ENCODE measurements at regions of chr4 and their contacts with region 1.

Region 1: GRCh38 chr4:38804654-38805295 is at the start of gene TLR1:
- DNase-seq: peak; percentile 30
- H3K4me3 Mint-ChIP-seq: peak within 1 kb of the TSS; percentile 69
- H3K27ac Mint-ChIP-seq: peak within 1 kb of the TSS; percentile 90
- H3K4me1 Mint-ChIP-seq: peaks cover 30% of the 10 kb centered on the region
- H3K27me3 Mint-ChIP-seq: no peaks in the 10 kb centered on the region
- total RNA-seq, gene TLR1: 4.0 to 4.2 TPM

Region 2: DNA sequence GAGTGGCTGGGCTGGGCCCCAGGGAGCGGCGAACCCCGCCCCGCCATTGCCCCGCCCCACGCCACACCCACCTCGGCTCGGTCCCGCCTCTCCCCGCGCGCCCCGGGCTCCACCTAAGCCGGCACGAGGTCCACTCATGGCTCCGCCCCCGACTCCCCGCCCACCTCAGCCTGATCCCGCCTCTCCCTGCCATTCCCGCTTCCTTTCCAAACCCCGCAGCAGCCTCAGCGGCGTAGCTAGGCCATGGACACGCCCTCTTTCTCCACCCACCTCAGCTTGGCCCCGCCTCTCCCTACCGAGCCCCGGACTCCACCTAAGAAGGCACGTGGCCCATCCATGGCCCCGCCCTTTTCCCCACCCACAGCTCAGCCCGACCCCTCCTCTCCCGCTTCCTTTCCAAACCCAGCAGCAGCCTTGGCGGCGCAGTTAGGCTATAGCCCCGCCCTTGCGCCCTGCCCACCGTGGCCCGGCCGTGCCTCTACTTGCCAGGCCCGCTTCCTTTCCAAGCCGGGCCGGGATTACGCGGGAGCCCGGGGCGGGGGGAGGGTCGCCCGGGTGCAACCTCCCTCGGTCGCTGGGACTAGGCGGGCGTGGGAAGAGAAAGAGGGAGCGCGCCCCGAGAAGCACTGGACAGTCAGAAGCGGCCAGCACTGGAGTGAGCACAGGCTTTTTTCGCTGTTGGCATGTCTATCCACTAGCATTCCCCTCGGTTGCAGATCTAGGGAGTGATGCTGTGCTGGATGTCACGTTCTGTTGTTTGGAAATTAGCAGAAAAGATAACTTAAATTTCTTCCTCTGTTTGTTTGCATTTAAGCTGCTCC is 1118.2 kb before region 1 on chr4 and contains the start of gene RELL1:
- CTCF ChIA-PET with region 1: no interaction called
- intact Hi-C with region 1: loop called (anchors 10 kb)
- DNase-seq: peak; percentile 100
- H3K4me3 Mint-ChIP-seq: peak within 1 kb of the TSS; percentile 84
- H3K27ac Mint-ChIP-seq: peak within 1 kb of the TSS; percentile 82
- H3K4me1 Mint-ChIP-seq: peaks cover 34% of the 10 kb centered on the region
- H3K27me3 Mint-ChIP-seq: no peaks in the 10 kb centered on the region
- total RNA-seq, gene RELL1: 8.7 to 10.3 TPM

Region 3: DNA sequence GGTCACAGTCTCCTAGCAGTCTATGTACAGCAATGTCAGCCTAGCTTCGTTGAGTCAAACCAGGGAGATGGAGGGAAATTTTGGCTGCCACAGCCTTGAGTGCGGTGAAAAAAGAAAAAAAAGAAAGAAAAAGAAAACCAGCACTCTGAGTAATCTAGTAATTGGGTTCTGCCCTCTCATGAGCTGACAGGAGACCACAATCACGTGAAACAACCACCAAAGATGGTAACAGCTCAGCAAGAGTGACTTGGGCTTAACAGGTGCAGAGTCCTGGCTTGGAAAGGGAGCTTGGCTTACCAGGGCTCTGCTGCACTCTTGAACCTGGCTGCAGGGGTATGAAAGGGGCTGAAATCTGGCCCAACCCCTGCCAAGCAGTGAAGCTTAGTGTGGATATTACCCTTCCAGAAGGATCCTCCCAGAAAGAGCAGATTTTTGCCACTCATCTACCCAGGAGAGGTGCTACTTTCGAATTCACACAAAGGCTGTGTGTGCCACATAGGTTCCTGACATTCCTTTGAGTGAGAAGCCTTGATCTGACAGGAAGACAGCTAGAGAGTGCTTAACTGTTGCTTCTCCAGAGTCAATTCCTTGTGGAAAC is 494.2 kb before region 1 on chr4:
- CTCF ChIA-PET with region 1: no interaction called
- intact Hi-C with region 1: loop called (anchors 1 kb)
- DNase-seq: peak; percentile 89
- H3K4me3 Mint-ChIP-seq: peak overlapping the region; percentile 10
- H3K27ac Mint-ChIP-seq: peak overlapping the region; percentile 72
- H3K4me1 Mint-ChIP-seq: peaks cover 65% of the 10 kb centered on the region
- H3K27me3 Mint-ChIP-seq: peaks cover 2% of the 10 kb centered on the region

Region 4: DNA sequence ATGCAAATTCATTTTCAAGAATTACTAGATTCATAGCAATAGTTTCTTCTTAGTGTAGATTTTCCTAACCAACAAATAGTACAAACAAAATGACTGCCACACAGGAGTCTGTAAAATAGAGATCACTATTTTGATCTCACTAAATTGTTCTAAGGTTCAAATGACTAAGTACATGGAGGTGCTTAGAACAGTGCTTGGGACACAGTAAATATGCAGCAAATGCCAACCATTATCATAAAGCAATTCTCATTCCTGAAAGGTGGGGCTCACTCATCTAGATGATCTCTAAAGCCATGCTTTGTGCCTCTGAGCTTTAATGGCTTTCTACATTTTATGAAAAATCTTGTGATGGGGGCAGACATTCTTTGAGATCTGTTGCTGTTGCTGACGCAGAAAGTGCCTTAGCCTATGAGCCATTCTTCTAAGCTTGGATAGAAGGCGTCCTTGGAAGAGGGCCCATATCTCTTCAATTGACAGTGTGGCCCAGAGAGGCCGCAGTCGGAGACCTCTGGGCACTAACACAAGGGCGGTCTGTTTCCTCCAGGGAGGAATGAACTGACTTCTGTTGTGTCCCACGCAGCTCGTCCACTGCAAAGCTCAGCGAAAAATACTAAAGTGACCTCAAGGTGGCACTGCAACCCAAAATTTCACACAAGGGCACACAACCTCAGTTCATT is 45.5 kb before region 1 on chr4:
- CTCF ChIA-PET with region 1: interaction called, 62 read pairs
- intact Hi-C with region 1: loop called (anchors 1 kb)
- DNase-seq: peak; percentile 82
- H3K4me3 Mint-ChIP-seq: no peak overlapping the region
- H3K27ac Mint-ChIP-seq: no peak overlapping the region
- H3K4me1 Mint-ChIP-seq: peaks cover 18% of the 10 kb centered on the region
- H3K27me3 Mint-ChIP-seq: no peaks in the 10 kb centered on the region

Region 5: GRCh38 chr4:38782452-38783108 is 22.2 kb before region 1 on chr4 and contains the start of gene TLR10:
- CTCF ChIA-PET with region 1: interaction called, 24 read pairs
- intact Hi-C with region 1: no loop called
- DNase-seq: peak; percentile 57
- H3K4me3 Mint-ChIP-seq: no peak within 1 kb of the TSS
- H3K27ac Mint-ChIP-seq: no peak within 1 kb of the TSS
- H3K4me1 Mint-ChIP-seq: peaks cover 4% of the 10 kb centered on the region
- H3K27me3 Mint-ChIP-seq: no peaks in the 10 kb centered on the region
- total RNA-seq, gene TLR10: 0.12 to 0.17 TPM

Region 6: GRCh38 chr4:38837849-38838248 is 33.1 kb after region 1 on chr4:
- CTCF ChIA-PET with region 1: no interaction called
- intact Hi-C with region 1: loop called (anchors 1 kb)
- DNase-seq: no peak
- H3K4me3 Mint-ChIP-seq: no peak overlapping the region
- H3K27ac Mint-ChIP-seq: peak overlapping the region; percentile 43
- H3K4me1 Mint-ChIP-seq: peaks cover 23% of the 10 kb centered on the region
- H3K27me3 Mint-ChIP-seq: no peaks in the 10 kb centered on the region

Region 7: DNA sequence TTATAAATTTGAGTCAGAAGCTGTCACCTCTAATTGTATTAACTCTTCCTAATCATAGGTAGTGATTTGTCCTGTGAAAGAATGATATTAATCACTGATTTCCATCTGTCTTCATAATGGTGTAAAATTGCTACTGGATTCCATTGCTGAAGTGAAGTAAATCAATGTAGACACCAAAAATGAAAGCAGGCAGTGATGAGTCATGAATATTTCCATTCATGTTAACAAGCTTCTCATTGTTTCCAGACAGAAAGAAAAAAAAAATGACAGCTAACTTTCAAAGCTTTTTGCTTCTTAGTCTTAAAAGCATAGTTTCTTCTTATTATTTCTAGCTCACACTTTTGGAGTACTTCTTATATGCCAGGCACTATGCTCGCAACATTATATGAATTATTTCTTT is 84.4 kb after region 1 on chr4:
- CTCF ChIA-PET with region 1: interaction called, 4 read pairs
- intact Hi-C with region 1: loop called (anchors 1 kb)
- DNase-seq: no peak
- H3K4me3 Mint-ChIP-seq: peak overlapping the region; percentile 46
- H3K27ac Mint-ChIP-seq: peak overlapping the region; percentile 88
- H3K4me1 Mint-ChIP-seq: peaks cover 23% of the 10 kb centered on the region
- H3K27me3 Mint-ChIP-seq: no peaks in the 10 kb centered on the region